Activated CD4-positive, alpha-beta memory T cell treated with anti-CD3 and anti-CD28 coated beads for 36 hours (primary cell): ENCODE measurements at regions of chr22 and their contacts with region 1.

Region 1: GRCh38 chr22:24325105-24325757 is 54.6 kb downstream of the SPECC1L start:
- DNase-seq: no peak
- H3K4me3 Mint-ChIP-seq: no peak overlapping the region
- H3K27ac Mint-ChIP-seq: no peak overlapping the region
- H3K4me1 Mint-ChIP-seq: peaks cover 30% of the 10 kb centered on the region
- H3K27me3 Mint-ChIP-seq: no peaks in the 10 kb centered on the region

Region 2: DNA sequence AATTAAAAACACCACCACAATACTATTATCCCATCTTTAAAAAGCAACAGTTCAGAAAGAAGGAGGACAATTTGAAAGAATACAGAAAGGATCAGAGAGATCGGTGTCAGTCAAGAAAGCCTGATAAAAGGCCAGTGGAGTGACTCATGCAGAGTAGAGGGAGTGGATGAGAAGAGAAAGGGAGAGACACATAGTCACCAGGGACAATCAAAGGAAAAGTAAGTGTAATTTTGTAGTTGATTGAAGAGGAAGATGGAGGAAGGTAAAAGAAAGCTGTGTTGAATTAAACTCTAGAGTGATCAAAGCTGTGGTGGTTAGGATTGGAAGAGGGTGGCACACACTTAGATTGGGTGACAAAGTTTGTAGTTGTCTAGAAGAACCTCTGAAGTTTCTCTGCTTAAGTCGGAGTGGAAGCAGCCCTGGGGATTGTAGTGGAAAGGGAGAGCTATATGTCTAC is 40.5 kb before region 1 on chr22:
- CTCF ChIA-PET with region 1: no interaction called
- POLR2A ChIA-PET with region 1: no interaction called
- intact Hi-C with region 1: loop called (anchors 2 kb)
- DNase-seq: no peak
- H3K4me3 Mint-ChIP-seq: peak overlapping the region; percentile 2
- H3K27ac Mint-ChIP-seq: peak overlapping the region; percentile 53
- H3K4me1 Mint-ChIP-seq: peaks cover 43% of the 10 kb centered on the region
- H3K27me3 Mint-ChIP-seq: no peaks in the 10 kb centered on the region

Region 3: GRCh38 chr22:24402460-24403192 is 77.4 kb after region 1 on chr22:
- CTCF ChIA-PET with region 1: no interaction called
- POLR2A ChIA-PET with region 1: no interaction called
- intact Hi-C with region 1: loop called (anchors 5 kb)
- DNase-seq: no peak
- H3K4me3 Mint-ChIP-seq: no peak overlapping the region
- H3K27ac Mint-ChIP-seq: peak overlapping the region; percentile 16
- H3K4me1 Mint-ChIP-seq: peaks cover 41% of the 10 kb centered on the region
- H3K27me3 Mint-ChIP-seq: no peaks in the 10 kb centered on the region

Region 4: DNA sequence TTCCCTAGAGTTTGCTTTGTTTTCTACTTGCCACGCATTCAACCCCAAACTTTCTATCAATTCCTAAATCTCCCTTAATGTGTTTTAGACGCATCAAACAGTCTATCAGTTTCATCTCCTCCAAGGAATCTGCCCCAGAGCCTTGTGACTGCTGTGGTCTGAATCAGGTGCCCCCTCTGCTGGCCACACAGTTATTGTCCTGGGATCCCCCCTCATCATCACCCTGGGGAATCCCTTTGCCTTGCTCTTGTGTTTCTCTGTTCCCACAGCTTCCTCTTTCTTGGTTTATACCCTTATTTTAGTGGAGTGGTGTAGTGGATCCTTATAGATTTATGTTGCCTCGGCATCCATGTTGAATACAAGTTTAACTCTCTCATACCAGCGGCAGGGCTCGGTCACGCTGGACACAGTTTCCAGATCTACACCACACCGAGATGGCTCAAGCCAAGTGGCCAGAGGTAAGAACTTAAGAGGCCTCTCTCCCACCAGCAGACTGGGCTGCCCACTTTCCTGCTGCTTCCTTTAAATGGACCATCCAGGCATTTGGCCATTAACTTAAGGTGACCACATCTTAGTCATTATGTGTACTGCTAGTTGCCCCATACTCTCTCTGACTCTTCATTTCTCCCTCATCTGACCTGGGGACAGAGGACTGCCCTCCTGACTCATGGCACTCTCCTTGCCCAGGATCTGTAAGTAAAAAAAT is 178.1 kb after region 1 on chr22:
- CTCF ChIA-PET with region 1: no interaction called
- POLR2A ChIA-PET with region 1: no interaction called
- intact Hi-C with region 1: loop called (anchors 1 kb)
- DNase-seq: peak; percentile 79
- H3K4me3 Mint-ChIP-seq: no peak overlapping the region
- H3K27ac Mint-ChIP-seq: no peak overlapping the region
- H3K4me1 Mint-ChIP-seq: peaks cover 7% of the 10 kb centered on the region
- H3K27me3 Mint-ChIP-seq: no peaks in the 10 kb centered on the region

Region 5: DNA sequence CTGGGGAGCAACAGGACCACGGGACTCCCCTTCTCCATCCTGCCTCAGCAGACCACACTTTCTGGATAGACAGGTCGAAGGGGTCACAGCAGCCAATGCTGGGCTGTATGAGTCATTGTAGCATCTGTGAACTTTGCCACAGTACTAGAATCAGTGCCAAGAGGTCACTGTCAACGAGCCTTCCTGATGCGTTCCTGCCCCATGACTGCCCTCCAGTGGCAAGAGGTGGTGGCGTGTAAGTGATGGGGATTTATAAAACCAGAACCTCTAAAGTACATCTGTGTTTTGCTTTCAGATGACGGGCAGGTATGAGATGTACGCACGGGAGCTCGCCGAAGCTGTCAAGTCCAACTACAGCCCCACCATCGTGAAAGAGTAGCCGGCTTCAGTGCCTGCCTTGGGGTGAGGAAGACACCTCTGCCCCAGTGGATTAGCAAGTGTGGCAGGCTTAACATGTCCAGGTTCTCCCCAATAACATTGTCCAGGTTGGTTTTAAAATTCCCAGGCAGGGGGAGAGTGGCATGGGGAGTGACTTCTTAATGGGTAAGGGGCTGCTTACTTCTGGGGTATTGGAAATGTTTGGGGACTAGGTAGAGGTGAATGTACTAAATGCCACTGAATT is 200.3 kb after region 1 on chr22:
- CTCF ChIA-PET with region 1: interaction called, 7 read pairs
- POLR2A ChIA-PET with region 1: no interaction called
- intact Hi-C with region 1: loop called (anchors 1 kb)
- DNase-seq: peak; percentile 90
- H3K4me3 Mint-ChIP-seq: no peak overlapping the region
- H3K27ac Mint-ChIP-seq: no peak overlapping the region
- H3K4me1 Mint-ChIP-seq: peaks cover 11% of the 10 kb centered on the region
- H3K27me3 Mint-ChIP-seq: no peaks in the 10 kb centered on the region